ENCODE measurements at regions of chr5 and their contacts with region 1.

Region 1: GRCh38 chr5:177390363-177391300 is 6.4 kb downstream of the SLC34A1 start:
- DNase-seq: peak; percentile 96
- ATAC-seq: peak; percentile 81
- H3K4me3 Mint-ChIP-seq: peak overlapping the region; percentile 13
- H3K27ac Mint-ChIP-seq: peak overlapping the region; percentile 76
- H3K4me1 Mint-ChIP-seq: peaks cover 36% of the 10 kb centered on the region
- H3K27me3 Mint-ChIP-seq: no peaks in the 10 kb centered on the region
- CTCF ChIP-seq: peak; percentile 93

Region 2: GRCh38 chr5:177276886-177277285 is 113.7 kb before region 1 on chr5:
- CTCF ChIA-PET with region 1: no interaction called
- POLR2A ChIA-PET with region 1: no interaction called
- intact Hi-C with region 1: no loop called
- DNase-seq: no peak
- ATAC-seq: no peak
- H3K4me3 Mint-ChIP-seq: no peak overlapping the region
- H3K27ac Mint-ChIP-seq: peak overlapping the region; percentile 68
- H3K4me1 Mint-ChIP-seq: peaks cover 4% of the 10 kb centered on the region
- H3K27me3 Mint-ChIP-seq: no peaks in the 10 kb centered on the region
- CTCF ChIP-seq: no peak

Region 3: DNA sequence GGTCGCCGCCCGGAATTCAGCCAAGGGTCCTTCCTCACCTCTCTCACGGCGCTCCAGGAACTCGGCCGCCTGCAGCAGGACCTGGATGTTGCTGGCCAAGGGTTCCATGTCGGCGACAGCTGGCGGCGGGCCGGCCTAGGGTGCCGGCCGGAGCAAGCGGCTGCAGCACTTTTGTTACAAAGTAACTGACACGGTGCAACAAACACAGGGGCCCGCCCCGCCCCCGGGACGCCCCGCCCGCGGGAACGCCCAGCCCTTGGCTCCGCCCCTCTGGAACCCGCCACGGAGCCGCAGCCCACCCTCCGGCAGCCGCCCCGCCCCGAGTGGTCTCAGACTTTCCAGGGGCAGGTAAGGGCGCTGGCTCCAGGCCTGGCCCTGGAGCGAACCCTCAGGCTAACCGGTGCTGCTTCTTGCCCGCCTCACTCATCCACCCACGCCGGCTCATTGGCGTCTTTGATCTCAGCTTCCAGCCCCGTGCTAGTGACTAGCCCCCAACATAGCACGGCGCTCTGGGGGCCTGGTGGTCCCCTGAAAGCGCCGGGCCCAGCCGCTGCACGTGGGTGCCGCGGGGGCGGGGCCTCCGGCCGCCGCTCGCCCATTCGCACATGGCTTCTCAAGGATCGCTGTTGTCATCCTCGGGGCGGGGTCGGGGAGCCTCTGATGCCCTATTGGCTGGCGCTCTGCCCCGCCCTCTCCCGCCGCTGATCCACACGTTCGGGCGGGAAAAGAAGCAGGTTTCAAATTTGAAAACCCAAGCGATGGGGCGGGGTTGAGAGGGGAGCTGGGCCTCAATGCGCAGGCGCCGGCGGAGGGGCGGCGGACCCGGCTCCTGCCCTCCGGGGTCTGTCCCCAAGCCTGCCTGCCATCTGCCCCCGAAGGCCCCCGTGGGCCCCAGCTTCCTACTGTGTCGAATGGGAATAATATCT is 78.6 kb before region 1 on chr5 and contains the start of gene MXD3:
- CTCF ChIA-PET with region 1: interaction called, 16 read pairs
- POLR2A ChIA-PET with region 1: interaction called, 6 read pairs
- intact Hi-C with region 1: loop called (anchors 10 kb)
- DNase-seq: peak; percentile 100
- ATAC-seq: peak; percentile 87
- H3K4me3 Mint-ChIP-seq: peak within 1 kb of the TSS; percentile 89
- H3K27ac Mint-ChIP-seq: peak within 1 kb of the TSS; percentile 91
- H3K4me1 Mint-ChIP-seq: peaks cover 26% of the 10 kb centered on the region
- H3K27me3 Mint-ChIP-seq: no peaks in the 10 kb centered on the region
- CTCF ChIP-seq: no peak
- total RNA-seq, gene MXD3: 19.3 to 25.1 TPM

Region 4: GRCh38 chr5:177351385-177352329 is 39.0 kb before region 1 on chr5 and contains the start of gene LMAN2:
- CTCF ChIA-PET with region 1: interaction called, 24 read pairs
- POLR2A ChIA-PET with region 1: interaction called, 7 read pairs
- intact Hi-C with region 1: no loop called
- DNase-seq: peak; percentile 96
- ATAC-seq: peak; percentile 98
- H3K4me3 Mint-ChIP-seq: peak within 1 kb of the TSS; percentile 93
- H3K27ac Mint-ChIP-seq: peak within 1 kb of the TSS; percentile 100
- H3K4me1 Mint-ChIP-seq: peaks cover 54% of the 10 kb centered on the region
- H3K27me3 Mint-ChIP-seq: no peaks in the 10 kb centered on the region
- CTCF ChIP-seq: no peak
- total RNA-seq, gene LMAN2: 79.9 to 87.5 TPM

Region 5: GRCh38 chr5:177362610-177363507 is 27.8 kb before region 1 on chr5:
- CTCF ChIA-PET with region 1: interaction called, 86 read pairs
- POLR2A ChIA-PET with region 1: interaction called, 5 read pairs
- intact Hi-C with region 1: no loop called
- DNase-seq: peak; percentile 80
- ATAC-seq: peak; percentile 72
- H3K4me3 Mint-ChIP-seq: peak overlapping the region; percentile 73
- H3K27ac Mint-ChIP-seq: peak overlapping the region; percentile 77
- H3K4me1 Mint-ChIP-seq: peaks cover 71% of the 10 kb centered on the region
- H3K27me3 Mint-ChIP-seq: no peaks in the 10 kb centered on the region
- CTCF ChIP-seq: no peak

Region 6: GRCh38 chr5:177431317-177432142 is 40.9 kb after region 1 on chr5:
- CTCF ChIA-PET with region 1: interaction called, 53 read pairs
- POLR2A ChIA-PET with region 1: interaction called, 12 read pairs
- intact Hi-C with region 1: no loop called
- DNase-seq: peak; percentile 92
- ATAC-seq: peak; percentile 37
- H3K4me3 Mint-ChIP-seq: peak overlapping the region; percentile 97
- H3K27ac Mint-ChIP-seq: peak overlapping the region; percentile 98
- H3K4me1 Mint-ChIP-seq: peaks cover 57% of the 10 kb centered on the region
- H3K27me3 Mint-ChIP-seq: no peaks in the 10 kb centered on the region
- CTCF ChIP-seq: no peak

Region 7: DNA sequence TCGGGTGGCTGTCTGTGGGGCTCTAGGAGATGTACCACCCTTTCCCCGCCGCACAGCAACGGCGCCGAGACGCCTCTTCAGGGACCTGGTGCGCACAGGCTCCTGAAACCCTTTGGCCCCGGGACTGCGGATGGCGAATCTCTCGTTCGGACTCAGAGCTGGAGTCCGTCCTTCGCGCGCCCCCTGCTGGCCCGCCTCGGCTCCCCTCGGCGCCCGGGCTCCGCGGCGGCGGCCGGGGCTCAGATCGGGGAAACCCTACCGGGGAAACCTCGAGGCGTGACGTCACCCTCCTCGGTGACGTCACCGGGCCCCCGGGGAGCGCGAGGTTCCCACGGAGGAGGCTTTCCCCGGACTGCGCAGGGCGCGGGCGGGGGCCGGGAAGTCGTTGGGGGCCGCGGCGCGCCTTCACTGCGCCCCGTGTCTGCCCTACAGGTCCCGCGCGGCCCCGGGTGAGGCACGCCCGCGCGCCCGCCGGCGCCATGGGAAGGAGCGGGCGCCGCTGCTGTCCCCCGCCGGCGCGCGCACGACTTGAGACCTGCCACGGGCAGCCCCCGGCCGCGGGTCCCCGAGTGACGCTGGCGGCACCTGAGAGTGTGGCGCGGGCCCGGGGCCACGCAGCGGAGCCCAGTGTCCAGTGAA is 63.9 kb after region 1 on chr5:
- CTCF ChIA-PET with region 1: interaction called, 237 read pairs
- POLR2A ChIA-PET with region 1: interaction called, 39 read pairs
- intact Hi-C with region 1: no loop called
- DNase-seq: peak; percentile 94
- ATAC-seq: peak; percentile 41
- H3K4me3 Mint-ChIP-seq: peak overlapping the region; percentile 83
- H3K27ac Mint-ChIP-seq: peak overlapping the region; percentile 80
- H3K4me1 Mint-ChIP-seq: peaks cover 27% of the 10 kb centered on the region
- H3K27me3 Mint-ChIP-seq: no peaks in the 10 kb centered on the region
- CTCF ChIP-seq: peak; percentile 79